Aorta (tissue), 5 donors: ENCODE measurements at regions of chr15 and their contacts with region 1.

Region 1: DNA sequence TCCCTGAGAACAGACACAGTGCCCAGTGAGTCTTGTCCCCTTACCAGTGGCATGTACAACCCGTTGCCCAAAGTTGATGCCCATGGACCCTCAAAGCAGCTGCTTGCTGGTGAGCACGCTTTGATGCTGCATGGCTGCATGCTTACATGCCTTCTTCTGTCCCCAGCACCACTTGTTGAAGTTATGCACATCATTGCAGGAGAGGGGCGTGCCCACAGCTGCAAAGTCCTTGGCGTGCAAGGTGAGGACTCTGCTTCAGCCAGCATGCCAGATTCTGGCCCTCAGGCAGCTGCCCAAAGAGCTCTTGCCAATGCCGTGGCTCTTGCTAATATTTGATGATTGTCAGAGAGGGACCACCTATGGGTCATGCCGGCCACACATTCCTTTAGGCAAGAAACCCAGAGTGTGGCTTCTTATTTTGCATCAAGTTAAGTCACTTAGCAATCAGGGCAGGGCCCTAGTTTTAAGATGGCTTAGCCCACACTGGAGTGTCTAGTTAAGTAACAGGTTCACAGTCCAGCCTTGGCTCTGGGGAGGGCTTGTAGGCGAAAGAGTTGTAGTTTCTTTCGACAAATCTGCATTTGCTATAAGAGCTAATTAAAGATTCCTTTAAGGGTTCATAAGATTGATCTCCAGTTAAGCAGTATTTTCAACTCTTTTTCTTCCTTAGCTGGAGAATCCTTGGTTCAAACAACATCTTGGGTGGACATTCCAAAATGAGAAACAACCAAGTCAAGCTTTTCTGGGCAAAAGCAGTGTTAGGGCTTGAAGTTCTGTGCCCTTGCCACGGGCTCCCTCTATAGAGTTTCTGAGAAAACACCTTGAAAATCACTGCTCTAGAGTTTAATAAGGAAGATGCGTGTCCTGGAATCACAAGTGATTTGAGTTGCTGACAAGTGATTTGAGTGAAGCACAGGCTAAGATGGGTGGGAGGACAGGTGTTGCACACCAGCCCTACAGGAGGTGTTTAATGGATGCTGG is 128.6 kb downstream of the SLCO3A1 start:
- DNase-seq: no peak
- ATAC-seq: no peak
- H3K4me3 ChIP-seq: no peak overlapping the region
- H3K27ac ChIP-seq: peak overlapping the region in 1 of 2 donors; percentile 35
- H3K4me1 ChIP-seq: peaks cover 2 to 11% of the 10 kb centered on the region in 2 donors
- H3K27me3 ChIP-seq: no peaks in the 10 kb centered on the region

Region 2: DNA sequence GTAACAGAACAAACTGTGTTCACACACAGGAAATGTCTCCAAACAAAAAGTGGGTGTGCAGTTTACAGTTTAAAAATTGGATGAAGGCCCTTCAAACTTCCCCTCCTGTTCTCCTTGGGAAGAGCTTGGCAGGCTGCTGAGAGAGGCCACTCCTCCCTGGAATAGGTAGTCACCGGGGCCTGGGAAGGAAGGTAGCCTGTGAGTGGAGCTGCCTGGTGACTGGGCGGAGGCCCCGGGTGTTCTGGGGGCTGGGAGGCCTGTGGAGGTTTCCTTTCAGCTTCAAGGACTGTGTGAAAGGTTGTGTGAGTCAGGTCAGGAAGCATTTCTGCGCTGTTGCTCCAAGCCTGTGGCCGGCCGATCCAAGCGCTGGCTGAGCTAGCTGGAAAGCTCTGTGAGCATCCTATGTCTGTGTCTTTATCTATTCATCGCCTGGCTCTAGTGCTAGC is 114.5 kb before region 1 on chr15:
- intact Hi-C with region 1: loop called in 1 of 2 experiments (anchors 5 kb)
- DNase-seq: peak; percentile 84 to 90
- ATAC-seq: peak; percentile 86
- H3K4me3 ChIP-seq: no peak overlapping the region
- H3K27ac ChIP-seq: peak overlapping the region in 1 of 2 donors; percentile 92
- H3K4me1 ChIP-seq: peaks cover 3 to 5% of the 10 kb centered on the region in 2 donors
- H3K27me3 ChIP-seq: no peaks in the 10 kb centered on the region

Region 3: DNA sequence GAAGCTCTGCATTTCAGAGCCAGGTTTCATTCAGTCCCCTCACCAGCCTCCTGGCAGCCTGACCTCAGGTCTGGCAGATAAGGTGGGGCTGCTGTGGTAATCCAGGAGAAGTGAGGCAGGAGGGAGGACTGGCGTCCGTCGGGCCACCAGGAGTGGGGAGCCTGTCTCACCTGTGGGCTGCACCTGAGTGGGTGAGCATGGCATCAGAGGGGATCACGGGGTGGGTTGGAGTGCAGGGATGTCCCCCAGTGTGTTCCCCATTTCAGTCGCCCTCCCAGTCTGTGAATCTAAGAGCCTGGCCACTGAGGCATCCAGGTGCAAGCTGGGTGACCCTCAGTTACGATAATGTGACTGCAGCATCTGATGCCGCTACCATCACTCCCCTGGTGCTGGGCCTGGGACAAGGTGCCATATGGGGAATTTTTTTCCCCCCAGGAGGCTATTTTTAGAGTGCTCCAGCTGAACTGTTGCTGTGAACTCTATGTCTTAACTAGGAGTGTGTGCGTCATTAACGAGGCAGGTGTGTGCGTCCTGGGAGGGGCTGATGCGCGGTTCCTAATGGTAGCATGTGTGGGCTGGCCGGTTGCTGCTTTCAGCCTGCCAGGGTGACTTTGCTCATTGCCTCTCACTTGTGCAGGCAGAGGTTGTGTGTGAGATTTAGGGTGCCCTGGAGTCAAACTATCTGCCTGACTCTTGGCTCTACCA is 36.6 kb after region 1 on chr15:
- intact Hi-C with region 1: loop called in 1 of 2 experiments (anchors 5 kb)
- DNase-seq: no peak
- ATAC-seq: no peak
- H3K4me3 ChIP-seq: no peak overlapping the region
- H3K27ac ChIP-seq: no peak overlapping the region
- H3K4me1 ChIP-seq: peaks cover 6 to 10% of the 10 kb centered on the region in 2 donors
- H3K27me3 ChIP-seq: no peaks in the 10 kb centered on the region

Region 4: GRCh38 chr15:92034227-92034626 is 52.1 kb after region 1 on chr15:
- intact Hi-C with region 1: loop called in 1 of 2 experiments (anchors 2 kb)
- DNase-seq: no peak
- ATAC-seq: no peak
- H3K4me3 ChIP-seq: no peak overlapping the region
- H3K27ac ChIP-seq: peak overlapping the region; percentile 5 to 70
- H3K4me1 ChIP-seq: peaks cover 5 to 13% of the 10 kb centered on the region in 2 donors
- H3K27me3 ChIP-seq: no peaks in the 10 kb centered on the region

Region 5: GRCh38 chr15:92062505-92062904 is 80.4 kb after region 1 on chr15:
- intact Hi-C with region 1: loop called in 1 of 2 experiments (anchors 5 kb)
- DNase-seq: no peak
- ATAC-seq: peak; percentile 58
- H3K4me3 ChIP-seq: no peak overlapping the region
- H3K27ac ChIP-seq: peak overlapping the region in 1 of 2 donors; percentile 92
- H3K4me1 ChIP-seq: peaks cover 2 to 4% of the 10 kb centered on the region in 2 donors
- H3K27me3 ChIP-seq: no peaks in the 10 kb centered on the region

Region 6: GRCh38 chr15:92069308-92070250 is 87.5 kb after region 1 on chr15:
- intact Hi-C with region 1: loop called (anchors 5 kb)
- DNase-seq: peak in 1 of 2 donors; percentile 84
- ATAC-seq: peak; percentile 78
- H3K4me3 ChIP-seq: peak overlapping the region; percentile 15 to 27
- H3K27ac ChIP-seq: peak overlapping the region in 1 of 2 donors; percentile 61
- H3K4me1 ChIP-seq: peaks cover 0 to 2% of the 10 kb centered on the region in 2 donors
- H3K27me3 ChIP-seq: no peaks in the 10 kb centered on the region

Region 7: GRCh38 chr15:92394309-92395097 is 412.4 kb after region 1 on chr15:
- intact Hi-C with region 1: no loop called
- DNase-seq: no peak
- ATAC-seq: no peak
- H3K4me3 ChIP-seq: no peak overlapping the region
- H3K27ac ChIP-seq: no peak overlapping the region
- H3K4me1 ChIP-seq: no peaks in the 10 kb centered on the region
- H3K27me3 ChIP-seq: no peaks in the 10 kb centered on the region